Panc1 (cell line): ENCODE measurements at regions of chr10 and their contacts with region 1.

Region 1: GRCh38 chr10:920450-920849 is 11.1 kb downstream of the LARP4B start:
- DNase-seq: no peak
- ATAC-seq: no peak
- H3K4me3 ChIP-seq: no peak overlapping the region
- H3K27ac ChIP-seq: no peak overlapping the region
- H3K4me1 ChIP-seq: no peaks in the 10 kb centered on the region; the same call in 1 of the 2 replicates
- H3K27me3 ChIP-seq: no peaks in the 10 kb centered on the region
- CTCF ChIP-seq: no peak

Region 2: DNA sequence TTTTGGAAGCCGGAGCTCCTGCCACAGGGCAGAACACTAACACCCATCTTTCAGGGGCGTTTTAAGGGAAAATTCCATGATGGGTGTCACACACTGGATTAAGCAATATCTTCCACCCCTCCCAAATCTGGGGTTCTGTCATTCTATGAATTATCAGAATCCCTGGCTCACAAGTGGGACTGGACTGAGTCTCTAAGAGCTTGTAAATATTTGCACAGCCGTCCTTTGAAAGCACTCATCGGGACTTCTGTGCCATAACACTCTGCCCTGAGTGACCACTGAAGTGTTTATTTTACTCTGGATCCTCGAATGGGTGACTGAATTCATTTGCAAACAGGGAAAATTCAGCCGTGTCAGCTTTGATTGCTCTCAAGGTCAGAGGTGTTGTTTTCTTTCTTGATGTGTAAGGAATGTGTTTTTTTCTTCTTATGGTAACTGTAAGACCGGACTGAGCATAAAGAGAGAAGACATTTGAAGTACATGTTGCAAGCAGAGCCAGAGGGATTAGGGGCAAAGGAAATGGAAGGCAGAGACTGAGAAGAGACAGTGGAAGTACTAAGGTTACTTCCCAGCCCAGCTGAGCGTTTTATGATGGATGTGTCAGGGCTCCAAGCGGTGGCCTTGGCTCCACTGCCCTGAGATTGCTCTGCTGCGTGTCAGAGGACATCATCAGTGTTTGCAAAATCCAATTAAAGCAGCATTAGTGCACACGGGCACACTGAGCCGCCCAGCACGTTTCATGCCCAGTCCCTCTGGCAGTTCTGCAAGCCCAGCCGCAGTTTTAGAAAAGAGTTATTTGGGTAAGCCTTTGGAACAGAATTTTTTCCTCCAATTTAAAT is 50.1 kb after region 1 on chr10:
- CTCF ChIA-PET with region 1: no interaction called
- POLR2A ChIA-PET with region 1: interaction called, 10 read pairs
- in situ Hi-C with region 1: no loop called
- intact Hi-C with region 1: no loop called
- DNase-seq: no peak
- ATAC-seq: no peak
- H3K4me3 ChIP-seq: no peak overlapping the region
- H3K27ac ChIP-seq: no peak overlapping the region
- H3K4me1 ChIP-seq: no peaks in the 10 kb centered on the region
- H3K27me3 ChIP-seq: no peaks in the 10 kb centered on the region
- CTCF ChIP-seq: no peak